ENCODE measurements at regions of chr4 and their contacts with region 1.

Region 1: GRCh38 chr4:40662962-40663604 is 33.4 kb upstream of the RBM47 start:
- DNase-seq: peak; percentile 89
- ATAC-seq: peak; percentile 100
- H3K4me3 ChIP-seq: peak overlapping the region; percentile 4; the same call in 1 of the 2 replicates
- H3K27ac ChIP-seq: no peak overlapping the region; the same call in 1 of the 2 replicates
- H3K4me1 ChIP-seq: peaks cover 6% of the 10 kb centered on the region
- H3K27me3 ChIP-seq: no peaks in the 10 kb centered on the region
- CTCF ChIP-seq: no peak
- POLR2A ChIP-seq: no peak
- RAD21 ChIP-seq: no peak

Region 2: DNA sequence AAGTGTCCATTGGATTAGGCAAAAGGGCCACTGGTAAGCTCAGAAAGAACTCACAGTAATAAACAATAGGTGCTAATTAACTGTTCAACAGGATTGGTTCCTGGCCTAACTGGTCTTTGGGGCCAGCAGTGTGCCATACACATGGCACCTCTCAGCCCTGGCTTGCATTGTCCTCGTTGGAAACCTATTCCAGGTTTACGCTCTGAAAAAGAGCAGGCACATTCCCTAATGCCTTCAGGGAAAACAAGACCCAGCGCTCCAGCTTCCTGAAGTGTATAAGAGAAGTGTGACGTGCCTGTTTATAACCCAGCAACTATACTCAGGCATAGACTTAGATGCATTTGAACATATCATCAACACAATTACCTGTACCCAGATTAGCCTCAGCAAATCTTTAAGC is 18.5 kb after region 1 on chr4:
- CTCF ChIA-PET with region 1: interaction called, 13 read pairs
- POLR2A ChIA-PET with region 1: no interaction called
- dilution Hi-C with region 1: no loop called
- in situ Hi-C with region 1: no loop called
- intact Hi-C with region 1: no loop called
- DNase-seq: no peak
- ATAC-seq: no peak
- H3K4me3 ChIP-seq: no peak overlapping the region
- H3K27ac ChIP-seq: no peak overlapping the region
- H3K4me1 ChIP-seq: no peaks in the 10 kb centered on the region
- H3K27me3 ChIP-seq: no peaks in the 10 kb centered on the region
- CTCF ChIP-seq: no peak
- POLR2A ChIP-seq: no peak
- RAD21 ChIP-seq: no peak

Region 3: GRCh38 chr4:40865696-40866095 is 202.6 kb after region 1 on chr4:
- CTCF ChIA-PET with region 1: no interaction called
- POLR2A ChIA-PET with region 1: no interaction called
- dilution Hi-C with region 1: no loop called
- in situ Hi-C with region 1: no loop called
- intact Hi-C with region 1: no loop called
- DNase-seq: no peak
- ATAC-seq: no peak
- H3K4me3 ChIP-seq: no peak overlapping the region
- H3K27ac ChIP-seq: no peak overlapping the region
- H3K4me1 ChIP-seq: peaks cover 3% of the 10 kb centered on the region; the same call in 1 of the 2 replicates
- H3K27me3 ChIP-seq: no peaks in the 10 kb centered on the region; the same call in 1 of the 2 replicates
- CTCF ChIP-seq: no peak
- POLR2A ChIP-seq: no peak
- RAD21 ChIP-seq: no peak